Gastrocnemius medialis (tissue), 4 donors: ENCODE measurements at regions of chr18 and their contacts with region 1.

Region 1: GRCh38 chr18:7233134-7233810 is 2.4 kb downstream of the LRRC30 start:
- DNase-seq: peak; percentile 78 to 80
- ATAC-seq: peak; percentile 55 to 59
- H3K4me3 ChIP-seq: peak overlapping the region; percentile 52 to 61 (median 54)
- H3K27ac ChIP-seq: peak overlapping the region; percentile 91 to 94 (median 92)
- H3K4me1 ChIP-seq: peaks cover 51 to 53% of the 10 kb centered on the region in 2 donors
- H3K27me3 ChIP-seq: no peaks in the 10 kb centered on the region
- CTCF ChIP-seq: no peak
- POLR2A ChIP-seq: peak in 1 of 2 donors; percentile 28

Region 2: DNA sequence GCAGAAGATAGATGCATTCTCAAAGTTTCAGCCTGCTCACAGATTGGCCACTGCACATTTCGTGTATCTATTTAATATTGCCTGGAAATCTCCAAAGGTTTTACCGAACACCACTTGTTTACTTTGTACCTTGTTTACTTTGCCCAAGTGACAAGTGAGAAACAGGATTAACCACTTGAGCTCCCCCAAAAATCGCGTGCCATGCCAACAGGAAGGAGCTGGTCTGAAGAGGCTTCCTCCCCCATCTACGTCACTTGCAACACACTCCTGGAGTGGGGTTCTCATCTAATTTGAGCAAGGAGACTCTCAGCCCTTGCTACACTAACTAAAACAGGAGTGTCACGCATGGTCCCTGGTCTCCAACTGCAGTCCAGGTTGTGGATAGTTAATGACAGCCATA is 1125.5 kb before region 1 on chr18:
- in situ Hi-C with region 1: no loop called
- intact Hi-C with region 1: no loop called
- DNase-seq: no peak
- ATAC-seq: no peak
- H3K4me3 ChIP-seq: no peak overlapping the region
- H3K27ac ChIP-seq: no peak overlapping the region
- H3K4me1 ChIP-seq: no peaks in the 10 kb centered on the region
- H3K27me3 ChIP-seq: no peaks in the 10 kb centered on the region
- CTCF ChIP-seq: no peak
- POLR2A ChIP-seq: no peak

Region 3: GRCh38 chr18:6741232-6741663 is 492.0 kb before region 1 on chr18:
- in situ Hi-C with region 1: no loop called
- intact Hi-C with region 1: loop called (anchors 10 kb)
- DNase-seq: peak; percentile 40 to 61
- ATAC-seq: peak; percentile 94 to 96
- H3K4me3 ChIP-seq: no peak overlapping the region
- H3K27ac ChIP-seq: peak overlapping the region; percentile 80 to 85 (median 82)
- H3K4me1 ChIP-seq: peaks cover 24 to 72% of the 10 kb centered on the region in 2 donors
- H3K27me3 ChIP-seq: no peaks in the 10 kb centered on the region
- CTCF ChIP-seq: no peak
- POLR2A ChIP-seq: no peak

Region 4: GRCh38 chr18:7608781-7609201 is 375.5 kb after region 1 on chr18:
- in situ Hi-C with region 1: no loop called
- intact Hi-C with region 1: loop called (anchors 2 kb)
- DNase-seq: no peak
- ATAC-seq: peak; percentile 71 to 79
- H3K4me3 ChIP-seq: no peak overlapping the region
- H3K27ac ChIP-seq: peak overlapping the region; percentile 75 to 88 (median 82)
- H3K4me1 ChIP-seq: peaks cover 68 to 81% of the 10 kb centered on the region in 2 donors
- H3K27me3 ChIP-seq: no peaks in the 10 kb centered on the region
- CTCF ChIP-seq: no peak
- POLR2A ChIP-seq: no peak

Region 5: DNA sequence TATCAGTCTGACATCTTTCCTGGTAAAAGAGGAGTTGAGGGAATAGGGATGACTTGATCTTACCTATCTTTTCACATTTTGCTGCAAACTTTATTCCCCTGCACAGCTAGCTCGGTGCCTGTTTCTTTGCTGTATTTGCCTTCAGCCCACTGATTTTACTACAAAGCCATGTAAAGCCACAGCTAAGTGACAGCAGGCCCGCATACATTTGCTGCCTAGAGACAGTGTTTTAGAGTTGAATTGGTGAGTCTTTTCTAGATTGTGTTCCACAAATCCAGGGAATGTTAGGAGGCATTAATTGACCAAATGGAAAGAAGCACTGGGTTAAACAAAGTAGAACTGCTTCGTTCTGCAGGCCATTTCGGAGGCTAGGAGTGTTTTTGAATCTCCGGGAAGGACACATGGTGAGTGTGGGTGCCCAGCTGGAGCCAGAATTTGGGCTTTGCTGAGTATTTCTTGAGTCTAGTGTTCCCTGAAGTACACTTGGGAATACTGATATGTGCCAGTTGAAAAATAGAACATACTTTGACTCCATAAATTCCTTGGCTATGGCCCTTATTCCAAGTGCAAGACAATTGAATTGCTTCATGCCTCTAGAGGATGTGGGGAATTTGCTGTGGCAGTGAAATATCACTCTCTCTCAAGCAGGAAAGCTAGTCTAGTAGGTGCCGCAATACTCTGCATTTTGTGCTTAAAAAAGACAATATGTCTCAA is 663.7 kb after region 1 on chr18:
- in situ Hi-C with region 1: no loop called
- intact Hi-C with region 1: loop called (anchors 10 kb)
- DNase-seq: no peak
- ATAC-seq: peak; percentile 49 to 70
- H3K4me3 ChIP-seq: no peak overlapping the region
- H3K27ac ChIP-seq: peak overlapping the region in 3 of 4 donors; percentile 8 to 45 (median 30)
- H3K4me1 ChIP-seq: peaks cover 54 to 55% of the 10 kb centered on the region in 2 donors
- H3K27me3 ChIP-seq: no peaks in the 10 kb centered on the region
- CTCF ChIP-seq: no peak
- POLR2A ChIP-seq: no peak

Region 6: DNA sequence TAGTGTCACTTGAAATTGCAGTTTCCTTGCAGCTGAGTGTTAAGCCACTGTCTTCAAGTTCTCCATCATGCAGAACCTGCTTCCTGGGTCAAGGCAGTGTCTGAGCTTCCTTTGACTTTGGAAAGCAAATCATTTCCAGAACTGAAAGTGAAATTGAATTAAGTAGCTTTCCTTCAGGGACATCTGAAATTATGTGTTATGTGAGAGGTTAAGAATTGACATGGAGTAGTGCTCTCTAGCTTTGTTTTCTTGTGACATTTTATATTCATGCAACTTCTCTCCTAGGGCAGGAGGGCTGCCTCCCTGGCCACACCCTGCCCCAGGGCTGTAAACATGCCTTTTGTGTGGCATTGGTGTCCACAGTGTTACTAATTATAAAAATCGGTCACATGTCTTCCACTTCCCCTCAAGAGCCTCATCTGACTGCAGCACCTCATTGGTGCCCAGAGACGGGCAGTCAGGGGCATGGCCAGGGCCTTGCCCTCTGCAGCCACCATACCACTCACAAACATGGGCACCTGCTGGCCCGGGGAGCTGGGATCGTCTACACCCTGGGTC is 1390.4 kb after region 1 on chr18:
- in situ Hi-C with region 1: loop called in 1 of 4 experiments (anchors 25 kb)
- intact Hi-C with region 1: loop called (anchors 5 kb)
- DNase-seq: peak; percentile 71 to 78
- ATAC-seq: peak; percentile 83 to 88
- H3K4me3 ChIP-seq: peak overlapping the region; percentile 13 to 29 (median 24)
- H3K27ac ChIP-seq: peak overlapping the region; percentile 83 to 90 (median 88)
- H3K4me1 ChIP-seq: peaks cover 94 to 96% of the 10 kb centered on the region in 2 donors
- H3K27me3 ChIP-seq: no peaks in the 10 kb centered on the region
- CTCF ChIP-seq: no peak
- POLR2A ChIP-seq: peak; percentile 88 to 98

Region 7: GRCh38 chr18:9136315-9137155 is 1903.3 kb after region 1 on chr18 and contains the start of gene ANKRD12:
- in situ Hi-C with region 1: no loop called
- intact Hi-C with region 1: loop called (anchors 10 kb)
- DNase-seq: peak; percentile 96 to 97
- ATAC-seq: peak; percentile 72 to 75
- H3K4me3 ChIP-seq: peak within 1 kb of the TSS; percentile 83 to 89 (median 86)
- H3K27ac ChIP-seq: peak within 1 kb of the TSS; percentile 97 to 98 (median 98)
- H3K4me1 ChIP-seq: peaks cover 58 to 64% of the 10 kb centered on the region in 2 donors
- H3K27me3 ChIP-seq: no peaks in the 10 kb centered on the region
- CTCF ChIP-seq: peak in 1 of 5 experiments; percentile 14
- POLR2A ChIP-seq: peak; percentile 93 to 94
- total RNA-seq, gene ANKRD12: 26.9 to 40.1 (median 36.7) TPM